Naive thymus-derived CD4-positive, alpha-beta T cell (primary cell): ENCODE measurements at regions of chr2 and their contacts with region 1.

Region 1: DNA sequence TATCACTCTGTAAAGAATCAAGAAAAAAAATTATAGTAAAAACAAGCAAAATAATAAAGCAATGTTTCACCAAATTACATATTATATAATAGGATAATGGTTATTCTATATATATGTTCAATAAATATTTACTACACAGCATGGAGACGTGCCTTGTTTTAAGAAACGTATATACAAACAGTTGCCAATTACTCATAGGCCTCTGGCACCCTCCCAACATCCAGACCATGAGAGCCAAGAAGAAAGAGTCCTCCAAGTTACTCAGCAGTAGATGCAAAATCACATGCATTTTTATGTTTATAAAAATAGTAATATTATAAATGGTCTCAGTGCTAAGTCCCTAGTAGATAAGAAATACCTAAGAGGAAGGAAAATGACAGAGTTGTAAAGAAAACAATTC is 64.8 kb downstream of the REV1 start:
- DNase-seq: no peak
- ATAC-seq: no peak
- H3K4me3 ChIP-seq: no peak overlapping the region
- H3K4me3 Mint-ChIP-seq: no peak overlapping the region
- H3K27ac ChIP-seq: no peak overlapping the region
- H3K27ac Mint-ChIP-seq: no peak overlapping the region
- H3K4me1 ChIP-seq: no peaks in the 10 kb centered on the region
- H3K4me1 Mint-ChIP-seq: no peaks in the 10 kb centered on the region
- H3K27me3 ChIP-seq: no peaks in the 10 kb centered on the region
- H3K27me3 Mint-ChIP-seq: no peaks in the 10 kb centered on the region

Region 2: GRCh38 chr2:99468155-99468554 is 43.1 kb after region 1 on chr2:
- CTCF ChIA-PET with region 1: no interaction called
- POLR2A ChIA-PET with region 1: no interaction called
- intact Hi-C with region 1: loop called in 1 of 2 experiments (anchors 1 kb)
- DNase-seq: no peak
- ATAC-seq: no peak
- H3K4me3 ChIP-seq: no peak overlapping the region
- H3K4me3 Mint-ChIP-seq: no peak overlapping the region
- H3K27ac ChIP-seq: no peak overlapping the region
- H3K27ac Mint-ChIP-seq: no peak overlapping the region
- H3K4me1 ChIP-seq: no peaks in the 10 kb centered on the region
- H3K4me1 Mint-ChIP-seq: peaks cover 9 to 67% (median 58%) of the 10 kb centered on the region in 7 donors
- H3K27me3 ChIP-seq: no peaks in the 10 kb centered on the region
- H3K27me3 Mint-ChIP-seq: no peaks in the 10 kb centered on the region

Region 3: GRCh38 chr2:99512181-99512591 is 87.2 kb after region 1 on chr2:
- CTCF ChIA-PET with region 1: no interaction called
- POLR2A ChIA-PET with region 1: no interaction called
- intact Hi-C with region 1: no loop called
- DNase-seq: no peak
- ATAC-seq: no peak
- H3K4me3 ChIP-seq: no peak overlapping the region
- H3K4me3 Mint-ChIP-seq: no peak overlapping the region
- H3K27ac ChIP-seq: no peak overlapping the region
- H3K27ac Mint-ChIP-seq: no peak overlapping the region
- H3K4me1 ChIP-seq: no peaks in the 10 kb centered on the region
- H3K4me1 Mint-ChIP-seq: no peaks in the 10 kb centered on the region
- H3K27me3 ChIP-seq: no peaks in the 10 kb centered on the region
- H3K27me3 Mint-ChIP-seq: peaks cover 0 to 18% (median under 1%) of the 10 kb centered on the region in 5 donors